ENCODE measurements at regions of chr9 and their contacts with region 1.

Region 1: DNA sequence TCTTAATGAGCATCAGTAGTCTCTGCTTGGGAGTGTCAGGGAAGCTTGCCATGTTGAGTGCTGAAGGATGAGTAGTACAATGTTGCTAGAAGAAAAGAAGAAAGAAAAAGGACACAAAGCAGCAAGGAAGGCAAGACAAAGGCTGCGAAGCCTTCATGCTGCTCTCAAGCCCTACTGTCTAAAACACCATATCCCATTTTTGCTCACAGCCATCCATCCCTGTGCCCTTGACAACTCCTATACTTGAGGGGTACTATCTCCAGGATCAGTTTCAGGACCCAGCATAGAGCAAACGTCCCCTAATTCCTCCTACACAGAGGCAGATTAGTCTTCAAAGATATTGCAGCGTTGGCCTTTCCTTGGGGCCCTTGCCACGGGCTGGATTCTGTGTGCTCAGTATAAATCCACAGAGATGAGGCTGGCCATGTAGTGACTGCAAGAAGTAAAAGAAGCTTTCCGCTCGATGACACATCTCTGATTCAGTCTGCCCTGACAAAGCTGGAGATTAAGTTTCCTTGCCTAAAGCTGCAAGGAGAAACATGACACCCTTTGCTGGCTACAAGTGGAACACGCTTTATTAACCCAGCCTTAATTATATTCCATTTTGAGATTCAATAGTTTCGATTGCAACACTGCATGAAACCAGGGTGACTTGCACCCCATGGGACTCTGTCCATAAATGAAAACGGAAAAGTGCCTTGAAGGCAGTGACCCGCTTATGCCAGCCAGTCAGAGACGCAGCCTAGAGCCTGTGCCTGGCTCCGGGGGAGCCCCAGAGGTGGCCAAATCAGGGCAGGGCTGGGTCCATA is 304.6 kb downstream of the ACTL7B start:
- DNase-seq: no peak
- ATAC-seq: no peak
- H3K4me3 ChIP-seq: no peak overlapping the region
- H3K27ac ChIP-seq: no peak overlapping the region
- H3K4me1 ChIP-seq: no peaks in the 10 kb centered on the region
- H3K27me3 ChIP-seq: no peaks in the 10 kb centered on the region
- CTCF ChIP-seq: no peak
- POLR2A ChIP-seq: no peak

Region 2: DNA sequence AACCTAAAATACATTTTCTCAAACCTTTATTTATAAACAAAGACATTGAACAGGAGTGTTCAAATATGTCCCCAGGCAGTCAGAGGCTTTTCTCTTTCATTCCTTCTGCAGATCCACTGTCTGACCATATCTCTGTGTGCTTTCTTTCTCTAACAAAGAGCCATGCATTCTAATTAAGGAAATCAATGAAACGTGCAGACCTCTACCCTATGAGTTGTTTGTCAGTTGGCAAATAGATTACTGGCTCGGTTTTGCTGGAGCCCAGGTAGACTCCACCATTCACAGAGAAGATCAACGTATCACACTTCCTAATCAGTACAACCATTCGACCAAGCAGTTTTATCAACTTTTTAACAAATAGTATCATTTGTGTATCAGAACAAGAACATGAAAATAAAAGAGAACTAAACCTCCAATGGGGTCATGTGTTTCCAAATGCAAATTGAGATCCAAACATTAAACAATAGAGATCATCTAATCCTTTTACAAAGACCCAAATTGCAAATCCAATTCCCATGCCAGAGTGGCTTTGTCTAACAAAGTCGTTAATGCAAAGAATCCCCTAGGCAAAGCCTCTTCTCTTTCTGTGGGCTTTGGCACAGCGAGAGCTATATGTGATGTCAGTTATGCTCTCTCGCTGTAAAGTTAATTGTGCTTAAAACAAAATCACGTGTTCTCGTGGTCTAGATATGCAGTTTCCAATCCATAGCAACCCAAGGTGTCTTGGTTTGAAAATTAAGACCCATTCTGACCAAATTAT is 1078.5 kb before region 1 on chr9:
- intact Hi-C with region 1: loop called in 1 of 2 experiments (anchors 10 kb)
- DNase-seq: no peak
- ATAC-seq: no peak
- H3K4me3 ChIP-seq: no peak overlapping the region
- H3K27ac ChIP-seq: no peak overlapping the region
- H3K4me1 ChIP-seq: no peaks in the 10 kb centered on the region
- H3K27me3 ChIP-seq: no peaks in the 10 kb centered on the region
- CTCF ChIP-seq: no peak
- POLR2A ChIP-seq: no peak

Region 3: GRCh38 chr9:108609227-108609896 is 58.1 kb after region 1 on chr9:
- intact Hi-C with region 1: no loop called
- DNase-seq: no peak
- ATAC-seq: no peak
- H3K4me3 ChIP-seq: no peak overlapping the region
- H3K27ac ChIP-seq: no peak overlapping the region
- H3K4me1 ChIP-seq: no peaks in the 10 kb centered on the region
- H3K27me3 ChIP-seq: no peaks in the 10 kb centered on the region
- CTCF ChIP-seq: no peak
- POLR2A ChIP-seq: no peak

Region 4: DNA sequence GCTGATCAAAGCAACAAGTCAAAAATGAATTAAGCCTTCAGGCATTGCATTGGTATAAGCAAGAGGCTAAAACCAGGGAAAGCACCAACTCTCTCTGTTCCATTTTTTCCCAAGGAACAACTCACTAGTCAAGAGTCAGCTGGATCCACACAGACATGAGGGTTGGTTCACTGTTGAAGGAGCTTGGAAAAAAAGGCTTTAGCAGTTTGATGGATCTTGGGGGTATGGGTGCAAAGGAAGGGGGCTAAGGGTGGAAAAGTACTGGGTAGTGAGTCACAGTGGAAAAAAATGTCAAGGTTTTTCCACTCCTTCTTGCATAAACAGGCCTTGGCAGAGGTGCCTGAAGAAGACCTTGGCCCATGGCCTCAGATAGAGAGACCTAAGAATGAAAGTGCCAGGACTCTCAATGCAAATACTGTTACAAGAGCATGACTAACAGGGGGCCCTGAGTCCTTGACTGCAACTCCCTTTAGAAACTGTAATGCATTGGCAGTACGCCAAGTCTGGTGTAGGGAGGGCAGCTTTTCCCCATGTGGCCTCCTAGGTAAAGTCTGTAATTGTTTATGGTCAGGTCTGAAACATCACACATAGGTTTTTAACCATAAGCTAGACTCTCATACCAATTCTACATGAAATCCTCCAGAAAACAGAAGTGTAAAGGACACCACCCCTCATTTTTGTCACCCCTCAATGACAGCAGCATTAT is 334.6 kb after region 1 on chr9:
- intact Hi-C with region 1: no loop called
- DNase-seq: peak in 2 of 3 donors; percentile 51 to 70
- ATAC-seq: peak; percentile 77 to 92 (median 82)
- H3K4me3 ChIP-seq: no peak overlapping the region
- H3K27ac ChIP-seq: peak overlapping the region; percentile 42 to 81 (median 72)
- H3K4me1 ChIP-seq: peaks cover 0 to 37% (median 7%) of the 10 kb centered on the region in 4 donors
- H3K27me3 ChIP-seq: no peaks in the 10 kb centered on the region
- CTCF ChIP-seq: no peak
- POLR2A ChIP-seq: no peak